ENCODE measurements at regions of chr16 and their contacts with region 1.

Region 1: DNA sequence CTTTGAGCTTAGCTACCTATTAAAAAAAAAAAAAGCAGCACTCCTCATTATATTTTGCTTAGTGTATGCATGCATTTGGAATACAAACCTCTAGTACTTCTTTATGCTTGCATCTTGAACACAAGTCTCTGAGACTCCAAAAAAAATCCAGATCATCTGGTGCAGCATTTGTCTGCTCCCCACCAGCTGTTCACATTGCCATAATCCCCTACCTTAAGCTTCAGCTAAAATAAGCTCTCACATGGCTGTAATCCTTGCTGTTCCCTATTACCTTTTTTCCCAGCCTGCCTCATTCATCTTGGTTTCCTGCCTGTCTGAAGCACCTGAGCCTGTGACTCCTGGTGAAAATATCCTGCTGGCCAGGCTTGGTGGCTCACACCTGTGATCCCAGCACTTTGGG is 7.5 kb upstream of the NFATC2IP start:
- DNase-seq: no peak
- H3K4me3 ChIP-seq: no peak overlapping the region
- H3K27ac ChIP-seq: no peak overlapping the region
- H3K4me1 ChIP-seq: peaks cover 3 to 9% (median 8%) of the 10 kb centered on the region in 4 experiments
- H3K27me3 ChIP-seq: no peaks in the 10 kb centered on the region

Region 2: DNA sequence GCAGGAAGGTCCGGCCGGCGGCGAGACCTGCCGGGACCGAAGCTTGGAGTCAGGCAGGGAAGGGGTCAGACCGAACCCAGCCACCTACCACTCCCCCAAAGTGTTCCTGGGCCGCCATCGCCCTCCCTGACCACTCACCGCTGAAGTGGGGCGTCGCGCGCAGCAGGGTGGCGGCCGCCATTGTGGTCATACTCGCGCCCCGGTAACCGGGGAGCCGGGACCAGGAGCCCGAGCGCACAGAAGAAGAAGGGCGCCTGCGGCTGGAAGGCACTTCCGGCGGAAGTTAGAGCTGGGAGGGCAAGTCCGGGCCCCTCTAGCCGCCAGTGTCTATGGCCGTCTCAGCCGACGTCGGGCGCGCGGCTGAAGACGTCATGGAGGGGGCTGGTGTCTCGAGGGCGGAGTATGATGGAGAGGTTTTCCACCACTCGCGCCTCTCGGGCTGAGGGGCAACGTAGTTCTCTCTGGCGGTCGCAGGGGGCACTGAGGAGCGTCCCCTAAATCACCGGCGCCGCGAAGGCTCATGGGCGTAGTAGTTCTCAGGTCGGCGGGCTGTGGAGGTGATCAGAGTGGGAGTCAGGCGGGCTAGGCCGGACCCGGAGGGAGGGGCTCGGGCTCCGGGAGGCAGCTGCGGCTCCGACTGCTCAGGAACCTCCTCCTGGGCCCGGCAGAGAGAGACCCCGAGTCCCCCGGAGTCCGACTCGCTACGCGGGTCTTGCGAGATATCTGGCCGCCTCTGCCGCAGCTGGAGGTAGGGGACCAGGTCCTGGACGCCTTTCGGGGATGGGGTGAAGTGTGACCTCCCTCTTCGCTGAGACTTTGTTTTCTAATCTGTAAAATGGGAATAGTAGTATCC is 97.0 kb before region 1 on chr16 and contains the start of gene TUFM:
- CTCF ChIA-PET with region 1: interaction called, 16 read pairs
- POLR2A ChIA-PET with region 1: no interaction called
- DNase-seq: peak; percentile 99
- H3K4me3 ChIP-seq: peak within 1 kb of the TSS; percentile 85 to 97 (median 93)
- H3K27ac ChIP-seq: peak within 1 kb of the TSS; percentile 79 to 90
- H3K4me1 ChIP-seq: peaks cover 4 to 25% (median 22%) of the 10 kb centered on the region in 4 experiments
- H3K27me3 ChIP-seq: no peaks in the 10 kb centered on the region

Region 3: DNA sequence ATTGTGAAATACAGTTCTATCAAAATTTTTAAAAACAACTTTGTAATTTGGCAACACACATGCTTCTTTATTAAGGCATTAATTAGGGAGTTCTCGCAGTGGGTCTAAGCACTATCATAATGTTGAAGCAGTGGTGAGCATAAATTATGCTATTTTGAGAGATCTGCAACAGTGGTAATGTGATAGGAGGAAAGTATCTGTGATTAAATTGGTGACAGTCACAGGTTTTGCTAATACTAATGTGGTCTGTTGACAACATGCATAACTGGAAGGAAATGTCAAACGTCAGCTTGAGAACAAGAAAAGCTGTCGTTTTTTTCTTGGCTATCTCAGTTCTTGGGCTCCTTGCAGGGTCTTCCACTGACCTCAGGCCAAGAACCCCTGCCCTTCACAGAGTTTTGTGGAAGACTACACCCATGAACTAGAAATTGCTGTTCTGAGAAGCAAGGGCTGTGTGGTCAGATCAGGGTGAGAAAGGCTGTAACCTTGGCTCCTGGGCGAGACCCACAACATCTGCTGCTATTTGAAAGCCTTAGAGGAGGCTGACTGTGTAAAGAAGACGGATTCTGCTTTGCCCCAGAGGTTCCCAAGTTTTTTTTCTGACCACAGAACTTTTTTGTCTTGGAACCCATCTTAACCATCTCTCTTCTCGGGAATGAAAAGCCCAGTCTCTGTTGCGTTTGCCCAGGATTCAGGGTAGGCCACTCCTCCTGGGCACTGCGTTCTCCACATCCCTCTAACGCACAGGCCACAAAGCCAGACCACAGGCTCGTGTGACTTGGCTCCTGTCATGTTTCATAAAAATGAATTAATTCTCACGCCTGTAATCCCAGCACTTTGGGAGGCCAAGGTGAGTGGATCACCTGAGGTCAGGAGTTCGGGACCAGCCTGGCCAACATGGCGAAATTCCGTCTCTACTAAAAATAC is 51.1 kb before region 1 on chr16:
- CTCF ChIA-PET with region 1: interaction called, 10 read pairs
- POLR2A ChIA-PET with region 1: no interaction called
- DNase-seq: no peak
- H3K4me3 ChIP-seq: no peak overlapping the region
- H3K27ac ChIP-seq: no peak overlapping the region
- H3K4me1 ChIP-seq: peaks cover 0 to 9% (median 0%) of the 10 kb centered on the region in 4 experiments
- H3K27me3 ChIP-seq: no peaks in the 10 kb centered on the region

Region 4: DNA sequence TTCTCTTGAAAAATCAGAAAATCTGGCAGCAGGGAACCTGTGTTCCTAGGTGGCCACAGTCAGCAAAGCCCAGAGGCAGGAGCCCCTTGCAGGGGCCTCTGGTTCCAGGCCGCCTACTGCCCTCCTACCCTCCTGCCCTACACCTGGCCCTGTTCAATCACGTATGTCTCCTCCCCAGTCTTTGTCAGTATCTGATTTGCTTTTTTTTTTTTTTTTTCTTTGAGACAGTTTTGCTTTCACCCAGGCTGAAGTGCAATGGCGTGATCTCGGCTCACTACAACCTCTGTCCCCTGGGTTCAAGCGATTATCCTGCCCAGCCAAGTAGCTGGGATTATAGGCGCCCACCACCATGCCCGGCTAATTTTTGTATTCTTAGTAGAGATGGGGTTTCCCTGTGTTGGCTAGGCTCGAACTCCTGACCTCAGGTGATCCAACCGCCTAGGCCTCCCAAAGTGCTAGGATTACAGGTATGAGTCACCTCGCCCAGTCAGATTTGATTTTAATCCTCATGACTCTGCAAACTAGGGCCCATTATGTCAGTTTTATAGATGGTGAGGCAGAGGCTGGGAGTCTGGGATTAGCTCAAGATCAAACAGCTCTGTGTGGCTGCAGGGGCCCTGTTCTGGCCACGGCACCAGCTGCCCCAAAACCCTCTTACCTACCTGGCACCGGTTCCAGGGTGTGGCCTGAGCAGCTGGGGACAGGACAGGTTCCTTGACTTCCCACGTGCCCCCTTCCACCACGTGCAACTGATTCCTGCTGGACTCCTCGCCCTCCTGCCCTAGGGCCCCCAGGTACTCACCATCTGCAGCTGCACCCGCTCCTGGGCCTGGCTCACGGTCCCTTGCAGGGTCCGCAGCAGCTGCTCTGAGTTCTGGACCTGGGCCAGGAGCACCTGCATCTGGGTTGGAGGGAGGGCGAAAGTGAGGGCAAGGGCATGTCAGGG is 32.9 kb before region 1 on chr16:
- CTCF ChIA-PET with region 1: interaction called, 24 read pairs
- POLR2A ChIA-PET with region 1: no interaction called
- DNase-seq: no peak
- H3K4me3 ChIP-seq: no peak overlapping the region
- H3K27ac ChIP-seq: no peak overlapping the region
- H3K4me1 ChIP-seq: no peaks in the 10 kb centered on the region
- H3K27me3 ChIP-seq: no peaks in the 10 kb centered on the region

Region 5: GRCh38 chr16:28925386-28926228 is 17.7 kb before region 1 on chr16:
- CTCF ChIA-PET with region 1: interaction called, 30 read pairs
- POLR2A ChIA-PET with region 1: interaction called, 7 read pairs
- DNase-seq: peak; percentile 93 to 98 (median 97)
- H3K4me3 ChIP-seq: peak overlapping the region; percentile 77 to 96 (median 86)
- H3K27ac ChIP-seq: peak overlapping the region; percentile 94 to 96
- H3K4me1 ChIP-seq: peaks cover 0 to 21% (median 14%) of the 10 kb centered on the region in 4 experiments
- H3K27me3 ChIP-seq: no peaks in the 10 kb centered on the region

Measured in common myeloid progenitor, CD34-positive (primary cell).